Activated T-helper 1 cell treated with anti-CD3 and anti-CD28 coated beads, Interleukin-12 subunit alpha, Interleukin-12 subunit beta, Interleukin-2, Interleukin-4 antibody, amounts not matched to agents 30 ng/mL and 10 ng/mL and 1 ng/mL, durations not matched to agents 14 hours and 24 hours and 36 hours (primary cell): ENCODE measurements at regions of chr6 and their contacts with region 1.

Region 1: DNA sequence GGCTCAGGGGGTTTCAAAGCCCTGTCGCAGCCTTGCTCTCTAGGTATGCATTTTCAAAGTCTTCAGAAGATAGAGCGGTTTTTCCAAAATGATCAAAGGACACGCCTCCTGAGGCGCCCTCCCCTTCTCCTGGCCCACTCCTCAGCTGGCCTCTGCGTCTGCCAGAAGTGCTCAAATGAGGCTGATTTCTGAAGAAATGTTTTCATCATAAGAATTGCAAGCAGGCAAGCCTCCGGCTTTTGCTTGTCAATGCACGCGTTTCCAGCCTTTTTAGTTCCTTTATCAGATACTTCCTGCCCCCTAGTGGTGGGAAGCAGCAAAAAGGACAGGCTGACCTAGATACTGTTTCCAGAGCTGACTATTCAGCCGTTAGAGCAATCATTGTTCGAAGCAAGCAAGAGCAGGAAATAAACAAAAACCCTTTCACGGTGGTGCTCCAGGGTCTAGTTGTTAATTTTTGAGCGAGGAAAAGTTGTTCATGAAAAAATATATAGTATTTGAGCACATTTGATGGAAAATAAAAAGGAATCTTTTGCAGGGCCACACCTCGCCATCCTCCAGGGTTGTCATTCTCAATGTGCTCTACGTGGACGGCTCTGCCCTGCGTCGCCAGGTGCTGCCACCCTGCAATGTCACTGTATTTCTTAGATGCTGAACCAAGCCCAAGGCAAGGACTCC is 93.4 kb upstream of the ASF1A start:
- DNase-seq: peak; percentile 79
- H3K4me3 Mint-ChIP-seq: peak overlapping the region; percentile 17
- H3K27ac Mint-ChIP-seq: peak overlapping the region; percentile 15
- H3K4me1 Mint-ChIP-seq: peaks cover 35% of the 10 kb centered on the region
- H3K27me3 Mint-ChIP-seq: no peaks in the 10 kb centered on the region

Region 2: DNA sequence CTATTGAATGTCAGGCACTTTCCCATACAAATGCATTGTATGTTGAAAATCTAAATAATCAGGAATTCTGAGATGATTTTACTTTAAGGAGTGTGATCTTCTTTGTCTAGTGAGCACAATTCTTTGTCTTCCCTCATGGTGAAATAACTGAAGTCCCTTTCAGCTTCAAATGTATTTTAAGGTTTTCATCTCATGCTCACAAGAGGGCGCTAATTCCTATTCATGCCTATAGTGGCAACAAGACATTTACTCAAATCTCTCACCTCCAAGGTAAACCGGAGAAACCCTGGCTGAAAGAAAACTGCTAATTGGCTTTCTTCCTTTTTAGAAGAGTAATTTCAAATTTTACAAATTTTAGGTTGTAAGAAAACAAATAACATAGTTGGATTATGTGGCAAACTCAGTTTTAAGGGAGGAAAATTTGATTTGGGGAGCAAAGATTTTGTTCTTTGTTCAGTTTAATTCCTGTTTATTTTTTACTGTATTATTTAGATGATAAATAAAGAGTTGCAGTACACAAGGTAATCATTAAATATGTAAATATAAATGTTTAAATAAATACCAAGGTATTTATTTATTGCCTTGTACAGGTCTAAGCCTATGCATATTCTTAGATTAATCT is 824.4 kb before region 1 on chr6:
- intact Hi-C with region 1: loop called (anchors 2 kb)
- DNase-seq: no peak
- H3K4me3 Mint-ChIP-seq: no peak overlapping the region
- H3K27ac Mint-ChIP-seq: no peak overlapping the region
- H3K4me1 Mint-ChIP-seq: no peaks in the 10 kb centered on the region
- H3K27me3 Mint-ChIP-seq: peaks cover 7% of the 10 kb centered on the region

Region 3: GRCh38 chr6:118565311-118565960 is 235.1 kb before region 1 on chr6:
- intact Hi-C with region 1: loop called (anchors 1 kb)
- DNase-seq: no peak
- H3K4me3 Mint-ChIP-seq: no peak overlapping the region
- H3K27ac Mint-ChIP-seq: peak overlapping the region; percentile 9
- H3K4me1 Mint-ChIP-seq: peaks cover 34% of the 10 kb centered on the region
- H3K27me3 Mint-ChIP-seq: no peaks in the 10 kb centered on the region

Region 4: DNA sequence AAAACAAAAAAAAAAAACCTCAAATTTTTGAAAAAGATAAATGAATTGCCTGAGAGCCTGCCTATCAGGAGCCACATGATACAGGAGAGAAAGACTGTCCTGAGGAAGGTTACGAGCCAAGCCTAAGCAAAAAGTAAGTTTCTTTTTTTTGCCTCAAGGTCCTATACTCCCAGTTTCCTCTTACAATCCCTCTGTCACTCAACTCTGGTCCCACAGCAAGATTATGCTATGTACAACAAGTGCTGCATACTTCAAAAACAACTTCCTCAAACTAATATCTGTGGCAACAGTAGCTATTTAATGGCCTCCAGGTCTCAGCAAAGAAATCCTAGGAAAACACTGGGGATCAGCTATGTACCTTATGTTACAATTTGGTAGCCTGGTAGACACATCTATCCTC is 205.7 kb before region 1 on chr6:
- intact Hi-C with region 1: no loop called
- DNase-seq: no peak
- H3K4me3 Mint-ChIP-seq: no peak overlapping the region
- H3K27ac Mint-ChIP-seq: no peak overlapping the region
- H3K4me1 Mint-ChIP-seq: peaks cover 20% of the 10 kb centered on the region
- H3K27me3 Mint-ChIP-seq: no peaks in the 10 kb centered on the region

Region 5: DNA sequence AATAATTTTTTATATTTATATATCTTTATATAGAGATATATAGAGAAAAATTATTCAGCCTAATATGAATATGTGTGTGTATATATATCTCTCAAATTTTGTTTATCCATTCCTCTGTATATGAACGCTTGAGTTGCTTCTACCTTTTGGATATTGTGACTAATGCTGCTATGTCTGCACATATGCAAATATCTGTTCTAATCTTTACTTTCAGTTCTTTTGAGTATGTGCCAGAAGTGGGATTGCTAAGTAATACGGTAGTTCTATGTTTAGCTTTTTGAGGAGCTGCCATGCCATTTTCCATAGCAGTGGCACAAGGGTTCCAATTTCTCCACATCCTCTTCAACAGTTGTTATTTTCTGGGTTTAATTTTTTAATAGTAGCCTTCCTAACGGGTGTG is 76.3 kb before region 1 on chr6:
- intact Hi-C with region 1: loop called (anchors 2 kb)
- DNase-seq: no peak
- H3K4me3 Mint-ChIP-seq: peak overlapping the region; percentile 46
- H3K27ac Mint-ChIP-seq: peak overlapping the region; percentile 40
- H3K4me1 Mint-ChIP-seq: peaks cover 56% of the 10 kb centered on the region
- H3K27me3 Mint-ChIP-seq: peaks cover 2% of the 10 kb centered on the region

Region 6: GRCh38 chr6:118776607-118777549 is 23.7 kb before region 1 on chr6:
- intact Hi-C with region 1: loop called (anchors 1 kb)
- DNase-seq: peak; percentile 55
- H3K4me3 Mint-ChIP-seq: no peak overlapping the region
- H3K27ac Mint-ChIP-seq: no peak overlapping the region
- H3K4me1 Mint-ChIP-seq: peaks cover 14% of the 10 kb centered on the region
- H3K27me3 Mint-ChIP-seq: peaks cover 8% of the 10 kb centered on the region